ENCODE measurements at regions of chr14 and their contacts with region 1.

Region 1: GRCh38 chr14:96309896-96310330 is 53.2 kb downstream of the ATG2B start:
- DNase-seq: no peak
- H3K4me3 ChIP-seq: no peak overlapping the region
- H3K27ac ChIP-seq: no peak overlapping the region
- H3K4me1 ChIP-seq: no peaks in the 10 kb centered on the region
- H3K27me3 ChIP-seq: no peaks in the 10 kb centered on the region
- CTCF ChIP-seq: no peak
- POLR2A ChIP-seq: no peak

Region 2: GRCh38 chr14:96320605-96321004 is 10.7 kb after region 1 on chr14:
- intact Hi-C with region 1: loop called in 1 of 2 experiments (anchors 2 kb)
- DNase-seq: no peak
- H3K4me3 ChIP-seq: no peak overlapping the region
- H3K27ac ChIP-seq: no peak overlapping the region
- H3K4me1 ChIP-seq: no peaks in the 10 kb centered on the region
- H3K27me3 ChIP-seq: no peaks in the 10 kb centered on the region
- CTCF ChIP-seq: no peak
- POLR2A ChIP-seq: no peak

Region 3: DNA sequence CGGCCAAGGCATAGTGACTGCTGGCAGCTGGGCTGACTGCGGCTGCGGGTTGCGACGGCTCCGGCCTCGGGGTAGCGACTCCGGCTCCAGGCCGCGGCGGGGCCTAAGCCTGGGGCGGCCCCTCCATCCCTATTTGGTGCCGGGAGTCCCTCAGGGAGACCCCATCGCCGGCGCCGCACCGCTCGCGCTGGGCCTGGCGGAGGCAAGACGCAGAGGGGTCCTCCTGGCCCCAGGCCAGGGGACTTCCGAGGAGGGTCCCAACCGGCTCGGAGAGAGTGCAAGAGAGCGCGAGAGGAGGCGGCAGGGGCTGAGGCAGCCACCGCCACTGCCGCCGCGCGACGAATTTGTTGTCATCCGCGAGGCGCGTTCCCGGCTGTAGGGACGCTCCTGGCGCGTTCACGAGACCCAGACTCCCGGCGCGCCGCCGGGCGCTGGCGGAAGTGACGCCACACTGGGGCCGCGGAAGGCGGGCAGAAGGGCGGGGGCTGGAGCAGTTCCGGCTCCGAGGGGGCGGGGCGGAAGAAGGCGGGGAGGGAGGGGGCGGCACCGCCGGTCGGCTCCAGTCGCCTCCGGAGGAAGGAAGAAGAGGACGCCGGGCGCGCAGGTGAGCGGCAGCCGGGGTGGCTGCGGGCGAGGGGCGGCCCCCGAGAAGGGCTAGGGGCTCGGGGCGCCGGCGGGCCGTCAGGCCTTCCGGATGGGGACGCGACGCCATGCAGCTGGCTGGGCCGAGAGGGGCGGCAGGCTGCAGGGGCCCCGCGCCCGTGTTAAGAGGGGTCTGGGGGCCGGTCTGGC is 53.2 kb after region 1 on chr14 and contains the starts of genes ATG2B and GSKIP:
- intact Hi-C with region 1: no loop called
- DNase-seq: peak; percentile 92 to 97 (median 95)
- H3K4me3 ChIP-seq: peak within 1 kb of the TSS; percentile 58 to 99 (median 94)
- H3K27ac ChIP-seq: peak within 1 kb of the TSS; percentile 77 to 97 (median 94)
- H3K4me1 ChIP-seq: peaks cover 11 to 44% of the 10 kb centered on the region in 2 donors
- H3K27me3 ChIP-seq: no peaks in the 10 kb centered on the region
- CTCF ChIP-seq: no peak
- POLR2A ChIP-seq: peak; percentile 48 to 90
- total RNA-seq, gene ATG2B: 11.8 to 34.8 (median 21.6) TPM
- total RNA-seq, gene GSKIP: 12.0 to 59.1 (median 15.1) TPM

Measured in adrenal gland (tissue), 19 donors.